Mammary epithelial cell (primary cell): ENCODE measurements at regions of chr2 and their contacts with region 1.

Region 1: GRCh38 chr2:228600265-228600664 is 418.8 kb upstream of the SPHKAP start:
- DNase-seq: peak; percentile 55
- H3K4me3 ChIP-seq: no peak overlapping the region
- H3K27ac ChIP-seq: no peak overlapping the region
- H3K4me1 ChIP-seq: no peaks in the 10 kb centered on the region
- H3K27me3 ChIP-seq: no peaks in the 10 kb centered on the region
- CTCF ChIP-seq: no peak

Region 2: GRCh38 chr2:227884511-227884947 is 715.7 kb before region 1 on chr2:
- CTCF ChIA-PET with region 1: no interaction called
- dilution Hi-C with region 1: no loop called
- in situ Hi-C with region 1: no loop called
- intact Hi-C with region 1: no loop called
- DNase-seq: peak; percentile 58
- H3K4me3 ChIP-seq: no peak overlapping the region
- H3K27ac ChIP-seq: no peak overlapping the region
- H3K4me1 ChIP-seq: peaks cover 7% of the 10 kb centered on the region
- H3K27me3 ChIP-seq: no peaks in the 10 kb centered on the region
- CTCF ChIP-seq: peak; percentile 90 to 98

Region 3: GRCh38 chr2:228516019-228516418 is 84.2 kb before region 1 on chr2:
- CTCF ChIA-PET with region 1: interaction called, 11 read pairs
- dilution Hi-C with region 1: no loop called
- in situ Hi-C with region 1: no loop called
- intact Hi-C with region 1: no loop called
- DNase-seq: no peak
- H3K4me3 ChIP-seq: no peak overlapping the region
- H3K27ac ChIP-seq: no peak overlapping the region
- H3K4me1 ChIP-seq: no peaks in the 10 kb centered on the region
- H3K27me3 ChIP-seq: no peaks in the 10 kb centered on the region
- CTCF ChIP-seq: no peak